ENCODE measurements at regions of chr5 and their contacts with region 1.

Region 1: GRCh38 chr5:100188339-100188738 is 346.8 kb upstream of the FAM174A start:
- DNase-seq: no peak
- H3K4me3 ChIP-seq: no peak overlapping the region
- CTCF ChIP-seq: no peak
- POLR2A ChIP-seq: no peak

Region 2: DNA sequence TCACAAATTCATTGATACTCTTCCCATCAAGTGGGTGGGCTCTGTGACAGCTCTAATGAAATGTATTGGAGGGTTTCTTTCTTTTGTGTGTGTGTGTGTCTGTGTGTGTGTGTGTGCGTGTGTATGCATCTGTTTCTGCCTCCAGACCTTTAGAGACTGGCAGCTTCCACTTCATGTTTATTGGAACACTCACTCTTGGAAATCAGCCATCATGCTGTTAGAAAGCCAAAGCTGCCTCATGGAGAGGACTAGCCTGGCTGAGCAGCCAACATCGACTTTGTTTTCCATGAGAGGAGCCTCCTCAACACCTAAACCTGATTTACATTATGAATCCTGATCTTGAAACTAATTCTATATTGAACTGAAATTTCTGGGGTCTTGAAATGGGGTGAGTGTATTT is 218.3 kb after region 1 on chr5:
- intact Hi-C with region 1: loop called (anchors 5 kb)
- DNase-seq: no peak
- H3K4me3 ChIP-seq: no peak overlapping the region
- CTCF ChIP-seq: no peak
- POLR2A ChIP-seq: no peak